GM23248 (cell line): ENCODE measurements at regions of chr5 and their contacts with region 1.

Region 1: DNA sequence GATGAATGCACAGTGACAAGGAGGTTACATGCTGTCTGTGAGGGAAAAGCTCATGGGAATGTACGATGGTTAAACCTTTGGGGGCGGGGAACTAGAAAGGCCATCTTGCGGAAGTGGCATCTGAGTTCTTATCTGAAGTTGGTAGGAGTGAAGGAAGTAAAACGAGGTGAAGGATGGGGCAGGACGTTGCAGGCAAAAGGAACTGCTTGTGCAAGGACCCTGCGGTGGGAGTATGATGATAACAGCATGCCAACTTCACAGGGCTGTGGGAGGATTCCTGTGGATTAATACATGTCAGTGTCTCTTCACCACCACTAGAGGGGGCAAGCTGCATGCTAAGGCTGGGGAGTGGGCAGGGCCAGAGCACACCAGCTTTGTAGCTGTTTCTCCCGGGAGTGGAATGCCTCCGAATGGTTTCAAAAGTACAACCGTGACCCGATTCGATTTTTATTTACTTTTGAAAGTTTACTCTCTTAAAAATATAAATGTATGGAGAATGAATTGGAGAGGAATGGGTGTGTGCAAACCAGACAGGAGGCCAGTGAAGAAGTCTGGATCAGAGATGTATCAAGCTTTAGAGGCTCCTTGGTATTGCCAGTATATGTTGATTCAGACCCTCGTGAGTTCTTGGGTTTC is 62.5 kb downstream of the CYFIP2 start:
- DNase-seq: peak; percentile 90
- H3K4me3 ChIP-seq: peak overlapping the region; percentile 60
- H3K27ac ChIP-seq: no peak overlapping the region
- H3K4me1 ChIP-seq: no peaks in the 10 kb centered on the region
- H3K27me3 ChIP-seq: no peaks in the 10 kb centered on the region

Region 2: DNA sequence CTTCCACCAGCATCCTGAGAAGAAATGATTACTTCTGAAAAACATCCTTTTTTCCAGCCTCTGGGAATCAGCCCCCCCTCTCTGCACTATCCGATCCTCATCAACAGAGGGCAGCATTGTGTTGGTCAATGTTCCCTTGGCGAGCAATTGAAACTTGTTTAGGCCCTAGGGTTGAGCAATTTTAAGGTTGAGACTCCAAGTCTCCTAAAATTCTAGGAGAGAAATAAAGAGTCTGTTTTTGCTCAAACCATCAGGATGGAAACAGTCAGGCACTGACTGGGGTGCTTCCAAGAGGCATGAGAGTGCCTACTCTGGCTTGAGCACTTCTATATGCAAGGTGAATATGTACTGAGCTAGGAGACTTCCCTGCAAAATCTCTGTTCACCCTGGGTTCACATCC is 74.8 kb before region 1 on chr5:
- in situ Hi-C with region 1: loop called (anchors 5 kb)
- DNase-seq: peak; percentile 80
- H3K4me3 ChIP-seq: no peak overlapping the region
- H3K27ac ChIP-seq: no peak overlapping the region
- H3K4me1 ChIP-seq: peaks cover 7% of the 10 kb centered on the region; the same call in 1 of the 2 replicates
- H3K27me3 ChIP-seq: no peaks in the 10 kb centered on the region

Region 3: DNA sequence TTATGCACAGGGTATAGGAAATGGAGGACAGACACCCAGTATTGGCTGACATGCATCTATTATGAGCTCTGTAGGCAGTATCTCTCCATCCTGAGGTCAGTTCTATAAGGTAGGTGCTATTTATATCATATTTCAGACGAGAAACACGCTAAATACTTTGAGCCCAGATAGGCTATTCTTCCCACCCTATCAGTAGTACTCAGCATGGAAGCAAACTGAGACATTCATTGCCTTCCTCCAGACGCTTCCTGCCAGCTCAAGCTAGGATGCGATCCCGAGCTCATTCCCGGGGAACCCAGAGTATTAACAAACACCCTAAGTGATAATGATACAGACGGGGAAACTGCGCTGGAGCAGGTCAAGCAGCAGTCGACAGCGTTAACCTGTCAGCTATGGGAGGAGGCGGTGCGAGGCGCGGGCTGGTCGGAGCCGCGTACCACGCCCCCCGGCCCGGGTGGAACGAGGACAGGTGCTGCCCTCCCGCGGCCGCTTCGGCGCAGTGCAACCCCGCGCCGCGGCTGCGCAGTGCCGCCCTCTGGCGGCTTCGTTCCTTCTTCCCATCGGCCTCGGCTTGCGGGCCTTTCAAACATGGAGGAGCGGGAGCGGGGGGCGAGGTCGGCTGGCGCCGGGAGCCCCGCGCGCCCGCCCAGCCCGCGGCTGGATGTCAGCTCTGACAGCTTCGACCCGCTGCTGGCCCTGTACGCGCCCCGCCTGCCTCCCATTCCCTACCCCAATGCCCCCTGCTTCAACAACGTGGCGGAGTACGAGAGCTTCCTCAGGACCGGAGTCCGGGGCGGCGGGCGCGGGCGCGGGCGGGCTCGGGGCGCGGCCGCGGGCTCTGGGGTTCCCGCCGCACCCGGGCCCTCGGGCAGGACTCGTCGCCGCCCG is 415.0 kb after region 1 on chr5 and contains the start of gene LSM11:
- in situ Hi-C with region 1: loop called (anchors 25 kb)
- DNase-seq: peak; percentile 94
- H3K4me3 ChIP-seq: peak within 1 kb of the TSS; percentile 85
- H3K27ac ChIP-seq: no peak within 1 kb of the TSS
- H3K4me1 ChIP-seq: peaks cover 1% of the 10 kb centered on the region
- H3K27me3 ChIP-seq: no peaks in the 10 kb centered on the region
- total RNA-seq, gene LSM11: 2.1 and 4.0 TPM in 2 replicates